Ascending aorta (tissue), 2 donors: ENCODE measurements at regions of chr17 and their contacts with region 1.

Region 1: DNA sequence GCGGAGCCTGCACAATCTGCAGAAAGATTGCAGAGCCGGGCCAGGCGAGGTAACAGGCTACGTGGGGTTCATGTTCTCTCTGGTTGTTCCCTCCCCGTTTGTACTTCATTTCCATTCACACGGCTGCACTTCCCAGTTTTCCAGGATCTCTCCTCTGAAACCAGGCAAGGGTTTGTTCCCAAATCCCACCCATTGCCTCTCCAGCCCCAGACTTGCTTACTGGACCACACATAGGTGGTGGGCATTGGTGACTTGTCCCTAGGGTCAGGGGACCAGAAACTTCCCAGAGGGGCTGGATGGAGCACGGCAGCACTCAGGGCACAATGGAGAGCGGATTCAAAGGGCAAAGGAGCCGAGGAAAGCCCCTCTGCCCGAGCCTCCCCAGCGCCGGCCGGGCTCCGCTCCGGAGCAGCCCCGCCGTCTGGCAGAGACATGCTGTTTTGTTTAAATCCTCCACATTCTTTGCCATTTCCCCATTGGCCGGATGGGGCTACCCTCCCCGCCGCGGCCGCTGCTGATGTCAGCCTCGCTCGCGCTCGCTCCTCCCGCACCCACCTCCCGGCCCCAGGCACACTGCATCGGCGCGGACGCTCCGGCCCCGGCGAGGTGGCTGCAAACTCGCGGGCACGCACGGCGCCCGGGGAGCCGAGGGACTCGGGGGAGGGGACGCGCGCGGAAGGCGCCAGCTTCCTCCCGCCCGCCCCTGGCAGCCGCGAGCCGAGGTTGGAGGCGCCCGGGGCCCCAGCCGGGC is at the start of gene PITPNC1:
- DNase-seq: peak; percentile 49 to 92
- H3K4me3 ChIP-seq: peak within 1 kb of the TSS; percentile 91 to 94
- H3K27ac ChIP-seq: peak within 1 kb of the TSS; percentile 88 to 95
- H3K4me1 ChIP-seq: peaks cover 0 to 16% of the 10 kb centered on the region in 2 donors
- H3K27me3 ChIP-seq: no peaks in the 10 kb centered on the region
- CTCF ChIP-seq: peak in 1 of 3 experiments; percentile 30
- total RNA-seq, gene PITPNC1: 10.9 TPM

Region 2: GRCh38 chr17:67366193-67367157 is 10.4 kb before region 1 on chr17 and contains the start of gene PSMD12:
- intact Hi-C with region 1: loop called (anchors 1 kb)
- DNase-seq: peak; percentile 74 to 96
- H3K4me3 ChIP-seq: peak within 1 kb of the TSS; percentile 90 to 96
- H3K27ac ChIP-seq: peak within 1 kb of the TSS; percentile 89 to 96
- H3K4me1 ChIP-seq: peaks cover 5 to 20% of the 10 kb centered on the region in 2 donors
- H3K27me3 ChIP-seq: no peaks in the 10 kb centered on the region
- CTCF ChIP-seq: peak in 1 of 3 experiments; percentile 7
- total RNA-seq, gene PSMD12: 31.8 TPM

Region 3: DNA sequence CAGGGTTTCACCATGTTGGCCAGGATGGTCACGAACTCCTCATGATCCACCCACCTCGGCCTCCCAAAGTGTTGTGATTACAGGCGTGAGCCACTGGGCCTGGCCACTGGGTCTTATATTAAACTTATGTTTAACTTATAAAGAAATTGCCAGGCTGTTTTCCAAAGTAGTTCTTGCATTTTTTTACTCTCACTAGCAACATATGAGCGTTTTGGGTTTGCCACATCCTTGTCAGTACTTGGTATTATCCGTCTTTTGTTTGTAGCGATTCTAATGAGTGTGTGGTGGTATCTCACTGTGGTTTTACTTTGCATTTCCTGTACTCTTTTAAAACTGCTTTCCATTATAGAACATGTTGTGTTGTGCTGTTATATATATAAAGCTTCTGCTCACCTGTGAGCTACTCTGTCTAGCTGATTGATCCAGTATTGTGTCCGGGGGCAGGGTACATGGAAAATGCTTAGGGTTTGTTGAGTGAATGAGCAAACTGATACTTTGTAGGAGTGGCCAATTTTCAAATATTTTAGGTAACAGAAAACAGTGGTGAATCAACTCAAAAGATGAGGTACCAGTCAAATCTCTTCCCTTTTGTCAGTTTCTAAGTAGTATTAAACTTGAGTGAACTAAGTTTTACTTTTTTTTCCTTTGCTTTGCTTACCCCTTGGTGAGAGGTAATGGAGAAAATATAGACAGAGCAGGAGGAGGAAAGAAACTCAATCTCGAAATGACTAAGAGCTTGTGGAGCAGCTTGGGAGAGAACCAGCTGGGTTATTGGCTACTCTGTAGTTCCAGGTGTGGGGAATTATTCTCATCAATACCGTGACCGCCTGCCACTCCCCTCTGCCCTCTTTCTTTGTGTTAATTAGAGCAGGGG is 76.0 kb after region 1 on chr17:
- intact Hi-C with region 1: no loop called
- DNase-seq: peak in 1 of 2 donors; percentile 30
- H3K4me3 ChIP-seq: no peak overlapping the region
- H3K27ac ChIP-seq: no peak overlapping the region
- H3K4me1 ChIP-seq: no peaks in the 10 kb centered on the region
- H3K27me3 ChIP-seq: no peaks in the 10 kb centered on the region
- CTCF ChIP-seq: no peak

Region 4: GRCh38 chr17:67475236-67475937 is 98.5 kb after region 1 on chr17:
- intact Hi-C with region 1: loop called (anchors 2 kb)
- DNase-seq: peak; percentile 24 to 83
- H3K4me3 ChIP-seq: peak overlapping the region in 1 of 2 donors; percentile 12
- H3K27ac ChIP-seq: no peak overlapping the region
- H3K4me1 ChIP-seq: peaks cover 0 to 4% of the 10 kb centered on the region in 2 donors
- H3K27me3 ChIP-seq: no peaks in the 10 kb centered on the region
- CTCF ChIP-seq: peak; percentile 68 to 93 (median 84)

Region 5: GRCh38 chr17:67689534-67690177 is 312.7 kb after region 1 on chr17:
- intact Hi-C with region 1: loop called (anchors 1 kb)
- DNase-seq: peak in 1 of 2 donors; percentile 66
- H3K4me3 ChIP-seq: no peak overlapping the region
- H3K27ac ChIP-seq: no peak overlapping the region
- H3K4me1 ChIP-seq: no peaks in the 10 kb centered on the region
- H3K27me3 ChIP-seq: no peaks in the 10 kb centered on the region
- CTCF ChIP-seq: peak; percentile 63 to 71 (median 66)

Region 6: GRCh38 chr17:67717624-67718329 is 340.9 kb after region 1 on chr17 and contains the start of gene NOL11:
- intact Hi-C with region 1: loop called (anchors 1 kb)
- DNase-seq: peak; percentile 95 to 100
- H3K4me3 ChIP-seq: peak within 1 kb of the TSS; percentile 91 to 97
- H3K27ac ChIP-seq: peak within 1 kb of the TSS; percentile 89 to 92
- H3K4me1 ChIP-seq: peaks cover 5 to 11% of the 10 kb centered on the region in 2 donors
- H3K27me3 ChIP-seq: no peaks in the 10 kb centered on the region
- CTCF ChIP-seq: peak; percentile 85 to 92 (median 87)
- total RNA-seq, gene NOL11: 22.0 TPM

Region 7: GRCh38 chr17:67824735-67825626 is 448.1 kb after region 1 on chr17 and contains the start of gene BPTF:
- intact Hi-C with region 1: loop called (anchors 5 kb)
- DNase-seq: peak; percentile 46 to 93
- H3K4me3 ChIP-seq: peak within 1 kb of the TSS; percentile 88 to 99
- H3K27ac ChIP-seq: peak within 1 kb of the TSS; percentile 85 to 99
- H3K4me1 ChIP-seq: peaks cover 0 to 15% of the 10 kb centered on the region in 2 donors
- H3K27me3 ChIP-seq: no peaks in the 10 kb centered on the region
- CTCF ChIP-seq: peak; percentile 72 to 98 (median 86)
- total RNA-seq, gene BPTF: 67.4 TPM

Region 8: GRCh38 chr17:68074279-68074678 is 697.4 kb after region 1 on chr17:
- intact Hi-C with region 1: no loop called
- DNase-seq: no peak
- H3K4me3 ChIP-seq: no peak overlapping the region
- H3K27ac ChIP-seq: no peak overlapping the region
- H3K4me1 ChIP-seq: no peaks in the 10 kb centered on the region
- H3K27me3 ChIP-seq: no peaks in the 10 kb centered on the region
- CTCF ChIP-seq: no peak